CD8-positive, alpha-beta T cell (primary cell): ENCODE measurements at regions of chr11 and their contacts with region 1.

Region 1: DNA sequence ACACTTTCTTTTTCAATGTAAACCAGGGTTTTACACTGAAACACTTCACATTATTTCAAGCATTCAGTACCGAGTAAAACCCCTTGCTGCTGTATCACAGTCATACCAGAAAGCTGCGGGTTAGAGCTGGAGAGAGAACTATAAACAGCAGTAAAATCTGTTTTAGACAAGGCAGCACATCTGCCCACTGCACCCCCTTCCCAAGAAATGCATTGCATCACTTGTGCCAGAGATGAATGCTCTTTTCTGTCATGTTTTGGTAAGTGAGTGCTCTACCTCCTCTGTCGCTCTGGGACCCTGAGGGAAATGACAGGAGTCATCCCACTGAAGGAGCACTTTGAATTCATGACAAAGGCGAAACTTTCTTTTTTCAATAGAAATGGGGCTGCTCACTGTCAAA is 107.2 kb downstream of the MAML2 start:
- DNase-seq: no peak
- ATAC-seq: peak; percentile 40
- H3K4me3 ChIP-seq: no peak overlapping the region
- H3K4me3 Mint-ChIP-seq: no peak overlapping the region
- H3K27ac ChIP-seq: no peak overlapping the region
- H3K27ac Mint-ChIP-seq: peak overlapping the region; percentile 45
- H3K4me1 ChIP-seq: peaks cover 39% of the 10 kb centered on the region
- H3K4me1 Mint-ChIP-seq: peaks cover 47% of the 10 kb centered on the region
- H3K27me3 ChIP-seq: no peaks in the 10 kb centered on the region
- H3K27me3 Mint-ChIP-seq: no peaks in the 10 kb centered on the region
- CTCF ChIP-seq: no peak

Region 2: GRCh38 chr11:96221244-96222070 is 14.3 kb before region 1 on chr11:
- CTCF ChIA-PET with region 1: interaction called, 5 read pairs
- POLR2A ChIA-PET with region 1: interaction called, 4 read pairs
- intact Hi-C with region 1: loop called in 1 of 2 experiments (anchors 2 kb)
- DNase-seq: no peak
- ATAC-seq: peak; percentile 49
- H3K4me3 ChIP-seq: no peak overlapping the region
- H3K4me3 Mint-ChIP-seq: peak overlapping the region; percentile 19
- H3K27ac ChIP-seq: peak overlapping the region in 1 of 2 experiments; percentile 45
- H3K27ac Mint-ChIP-seq: peak overlapping the region; percentile 90
- H3K4me1 ChIP-seq: peaks cover 89% of the 10 kb centered on the region
- H3K4me1 Mint-ChIP-seq: peaks cover 79% of the 10 kb centered on the region
- H3K27me3 ChIP-seq: no peaks in the 10 kb centered on the region
- H3K27me3 Mint-ChIP-seq: no peaks in the 10 kb centered on the region
- CTCF ChIP-seq: no peak